ENCODE measurements at regions of chr4 and their contacts with region 1.

Region 1: GRCh38 chr4:20251796-20252655 is at the start of gene SLIT2:
- DNase-seq: peak; percentile 68
- ATAC-seq: peak; percentile 75
- H3K4me3 ChIP-seq: peak within 1 kb of the TSS; percentile 55
- H3K27ac ChIP-seq: no peak within 1 kb of the TSS; the same call in 1 of the 2 replicates
- H3K4me1 ChIP-seq: peaks cover 11% of the 10 kb centered on the region
- H3K27me3 ChIP-seq: peaks cover 22% of the 10 kb centered on the region
- CTCF ChIP-seq: no peak
- POLR2A ChIP-seq: peak; percentile 93
- RAD21 ChIP-seq: no peak
- total RNA-seq, gene SLIT2: 13.6 and 18.1 TPM in 2 replicates

Region 2: GRCh38 chr4:19224820-19225219 is 1027.2 kb before region 1 on chr4:
- CTCF ChIA-PET with region 1: interaction called, 4 read pairs
- POLR2A ChIA-PET with region 1: no interaction called
- dilution Hi-C with region 1: no loop called
- in situ Hi-C with region 1: loop called (anchors 10 kb)
- intact Hi-C with region 1: loop called (anchors 1 kb)
- DNase-seq: peak; percentile 42
- ATAC-seq: no peak
- H3K4me3 ChIP-seq: no peak overlapping the region
- H3K27ac ChIP-seq: no peak overlapping the region
- H3K4me1 ChIP-seq: no peaks in the 10 kb centered on the region
- H3K27me3 ChIP-seq: no peaks in the 10 kb centered on the region
- CTCF ChIP-seq: peak; percentile 41
- POLR2A ChIP-seq: no peak
- RAD21 ChIP-seq: peak; percentile 49

Region 3: DNA sequence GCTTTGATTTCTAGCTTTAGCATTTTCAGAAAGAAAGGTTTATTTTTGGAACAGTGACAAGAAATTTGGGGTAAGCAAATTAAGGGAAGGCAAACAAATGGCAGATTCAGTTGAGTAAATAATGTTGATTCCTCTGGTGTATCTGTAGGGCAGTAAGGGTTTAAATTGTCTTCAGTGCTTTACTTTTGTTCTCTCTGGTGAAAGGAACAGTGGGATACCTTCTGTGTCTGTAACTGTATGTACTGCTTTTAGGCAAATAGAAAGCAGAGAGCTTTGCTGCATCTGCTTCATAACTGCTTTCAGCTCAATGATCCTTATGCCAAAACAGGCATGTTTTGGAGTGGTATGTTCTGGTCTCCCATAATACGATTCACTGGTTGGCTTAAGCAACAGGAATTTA is 932.4 kb before region 1 on chr4:
- CTCF ChIA-PET with region 1: no interaction called
- POLR2A ChIA-PET with region 1: no interaction called
- dilution Hi-C with region 1: no loop called
- in situ Hi-C with region 1: loop called (anchors 10 kb)
- intact Hi-C with region 1: no loop called
- DNase-seq: no peak
- ATAC-seq: no peak
- H3K4me3 ChIP-seq: no peak overlapping the region
- H3K27ac ChIP-seq: no peak overlapping the region
- H3K4me1 ChIP-seq: no peaks in the 10 kb centered on the region
- H3K27me3 ChIP-seq: no peaks in the 10 kb centered on the region
- CTCF ChIP-seq: no peak
- POLR2A ChIP-seq: no peak
- RAD21 ChIP-seq: no peak

Region 4: DNA sequence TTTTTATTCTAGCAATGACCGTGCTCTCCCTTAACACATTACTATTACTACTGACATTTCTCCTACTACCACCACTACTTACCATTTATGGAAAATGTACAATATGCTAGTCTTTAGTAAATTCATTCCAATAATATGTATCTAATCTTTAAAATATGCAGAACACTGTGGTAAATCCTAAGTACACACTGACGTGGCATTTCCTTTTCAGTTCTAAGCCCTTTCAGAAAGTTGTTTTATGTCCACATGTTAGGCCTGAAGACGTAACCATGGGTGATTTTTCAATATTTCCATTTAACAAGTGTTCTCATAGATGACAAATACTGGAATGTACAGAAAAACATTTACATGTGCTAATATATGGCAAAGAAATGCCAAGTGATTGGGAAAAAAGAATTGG is 269.0 kb before region 1 on chr4:
- CTCF ChIA-PET with region 1: interaction called, 3 read pairs
- POLR2A ChIA-PET with region 1: no interaction called
- dilution Hi-C with region 1: no loop called
- in situ Hi-C with region 1: no loop called
- intact Hi-C with region 1: loop called (anchors 1 kb)
- DNase-seq: peak; percentile 99
- ATAC-seq: peak; percentile 74
- H3K4me3 ChIP-seq: no peak overlapping the region
- H3K27ac ChIP-seq: peak overlapping the region; percentile 86; the same call in 1 of the 2 replicates
- H3K4me1 ChIP-seq: peaks cover 4% of the 10 kb centered on the region
- H3K27me3 ChIP-seq: no peaks in the 10 kb centered on the region
- CTCF ChIP-seq: no peak
- POLR2A ChIP-seq: no peak
- RAD21 ChIP-seq: peak; percentile 11

Region 5: GRCh38 chr4:20299515-20299914 is 47.5 kb after region 1 on chr4:
- CTCF ChIA-PET with region 1: no interaction called
- POLR2A ChIA-PET with region 1: no interaction called
- dilution Hi-C with region 1: no loop called
- in situ Hi-C with region 1: no loop called
- intact Hi-C with region 1: no loop called
- DNase-seq: peak; percentile 41
- ATAC-seq: no peak; the same call in 1 of the 2 replicates
- H3K4me3 ChIP-seq: no peak overlapping the region
- H3K27ac ChIP-seq: no peak overlapping the region
- H3K4me1 ChIP-seq: no peaks in the 10 kb centered on the region
- H3K27me3 ChIP-seq: no peaks in the 10 kb centered on the region
- CTCF ChIP-seq: peak; percentile 57
- POLR2A ChIP-seq: no peak
- RAD21 ChIP-seq: peak; percentile 42

Region 6: GRCh38 chr4:20544645-20545044 is 292.6 kb after region 1 on chr4:
- CTCF ChIA-PET with region 1: no interaction called
- POLR2A ChIA-PET with region 1: no interaction called
- dilution Hi-C with region 1: no loop called
- in situ Hi-C with region 1: no loop called
- intact Hi-C with region 1: loop called (anchors 5 kb)
- DNase-seq: peak; percentile 71
- ATAC-seq: peak; percentile 90
- H3K4me3 ChIP-seq: no peak overlapping the region
- H3K27ac ChIP-seq: no peak overlapping the region
- H3K4me1 ChIP-seq: no peaks in the 10 kb centered on the region
- H3K27me3 ChIP-seq: no peaks in the 10 kb centered on the region
- CTCF ChIP-seq: peak; percentile 76
- POLR2A ChIP-seq: no peak
- RAD21 ChIP-seq: peak; percentile 78

Measured in IMR-90 (cell line).